PC-3 (cell line): ENCODE measurements at regions of chr7 and their contacts with region 1.

Region 1: GRCh38 chr7:5255832-5256231 is 26.9 kb upstream of the SLC29A4 start:
- DNase-seq: peak; percentile 4
- ATAC-seq: peak; percentile 50
- H3K4me3 ChIP-seq: no peak overlapping the region
- H3K27ac ChIP-seq: no peak overlapping the region
- H3K4me1 ChIP-seq: no peaks in the 10 kb centered on the region
- H3K27me3 ChIP-seq: no peaks in the 10 kb centered on the region
- CTCF ChIP-seq: no peak

Region 2: DNA sequence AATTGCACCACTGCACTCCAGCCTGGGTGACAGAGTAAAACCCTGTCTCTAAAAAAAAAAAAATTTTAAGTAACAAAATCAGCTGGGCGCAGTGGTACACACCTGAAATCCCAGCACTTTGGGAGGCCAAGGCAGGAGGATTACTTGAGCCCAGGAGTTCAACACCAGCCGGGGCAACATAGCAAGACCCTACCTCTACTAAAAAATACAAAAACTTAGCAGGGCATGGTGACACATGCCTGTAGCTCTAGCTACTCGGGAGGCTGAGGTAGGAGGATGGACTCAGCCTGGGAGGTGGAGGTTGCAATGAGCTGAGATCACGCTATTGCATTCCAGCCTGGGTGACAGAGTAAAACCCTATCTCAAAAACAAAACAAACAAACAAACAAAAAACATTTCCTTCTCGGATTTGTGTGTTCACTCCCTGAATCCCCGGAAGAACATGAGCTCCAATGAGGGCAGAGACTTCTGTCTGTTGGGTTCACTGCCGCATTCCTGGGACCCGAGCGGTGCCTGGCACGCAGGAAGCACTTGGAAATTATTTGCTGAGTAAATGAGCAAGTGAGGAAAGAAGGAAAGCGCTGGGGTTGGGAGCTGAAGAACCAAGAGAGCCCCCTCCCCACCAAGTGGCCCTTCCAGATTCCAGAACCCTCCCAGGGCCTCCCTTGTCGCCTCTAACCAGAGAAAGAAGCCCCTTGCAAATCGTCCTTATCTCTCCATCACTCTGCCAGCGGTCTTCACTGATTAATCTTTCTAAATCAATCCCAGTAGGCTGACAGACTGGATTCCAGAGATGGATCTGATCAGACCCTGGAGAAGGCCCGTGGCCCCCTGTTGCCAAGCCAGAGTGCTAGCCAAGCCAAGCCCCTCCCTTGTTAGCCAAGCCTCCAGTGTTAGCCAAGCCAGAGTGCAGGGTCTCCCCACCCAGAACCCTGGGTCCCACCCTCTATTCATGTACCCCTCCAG is 161.6 kb after region 1 on chr7:
- CTCF ChIA-PET with region 1: no interaction called
- POLR2A ChIA-PET with region 1: interaction called, 12 read pairs
- intact Hi-C with region 1: no loop called
- DNase-seq: peak; percentile 40
- ATAC-seq: no peak
- H3K4me3 ChIP-seq: peak overlapping the region; percentile 99; the same call in 1 of the 2 replicates
- H3K27ac ChIP-seq: peak overlapping the region; percentile 95
- H3K4me1 ChIP-seq: peaks cover 22% of the 10 kb centered on the region
- H3K27me3 ChIP-seq: no peaks in the 10 kb centered on the region
- CTCF ChIP-seq: no peak